ENCODE measurements at regions of chr11 and their contacts with region 1.

Region 1: GRCh38 chr11:34997952-34998528 is 81.6 kb downstream of the PDHX start:
- DNase-seq: peak; percentile 34
- H3K4me3 ChIP-seq: no peak overlapping the region
- H3K27ac ChIP-seq: no peak overlapping the region
- H3K4me1 ChIP-seq: no peaks in the 10 kb centered on the region
- CTCF ChIP-seq: peak; percentile 94

Region 2: DNA sequence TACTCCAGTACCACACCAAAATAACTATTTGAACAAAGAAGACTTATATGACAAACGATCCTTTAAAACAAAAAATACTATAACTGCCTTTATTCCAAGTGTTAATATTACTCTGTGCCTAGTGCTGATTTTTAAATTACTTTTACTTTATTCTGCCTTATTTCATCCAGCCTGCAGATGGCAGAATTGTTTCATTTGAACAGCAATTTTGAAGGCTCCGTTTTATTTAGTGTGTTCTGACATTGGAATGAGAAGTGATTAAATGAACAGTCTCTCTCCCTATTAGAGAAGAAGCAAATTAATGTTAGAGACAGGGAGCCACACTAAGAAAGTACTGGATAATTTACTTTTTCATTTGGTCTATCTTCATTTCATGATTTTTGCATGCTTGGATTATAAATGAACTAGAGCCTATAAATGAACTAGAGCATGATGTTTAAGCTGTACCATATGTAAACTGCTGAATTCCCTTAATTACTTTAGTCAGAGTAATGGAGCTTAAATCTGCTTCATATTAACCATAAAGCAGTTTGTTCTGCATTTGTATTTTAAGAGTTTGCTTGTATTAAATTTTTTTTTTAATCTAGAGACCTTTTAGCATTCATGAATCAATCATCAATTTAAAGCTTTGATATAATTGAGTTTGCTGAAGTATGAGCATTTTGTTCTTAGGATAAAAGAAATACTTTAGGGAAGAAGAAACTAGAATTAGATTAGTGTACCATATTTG is 71.8 kb before region 1 on chr11:
- CTCF ChIA-PET with region 1: no interaction called
- POLR2A ChIA-PET with region 1: interaction called, 7 read pairs
- intact Hi-C with region 1: loop called (anchors 5 kb)
- DNase-seq: peak; percentile 58
- H3K4me3 ChIP-seq: no peak overlapping the region
- H3K27ac ChIP-seq: no peak overlapping the region
- H3K4me1 ChIP-seq: no peaks in the 10 kb centered on the region
- CTCF ChIP-seq: peak; percentile 97

Region 3: GRCh38 chr11:35058669-35059434 is 60.8 kb after region 1 on chr11:
- CTCF ChIA-PET with region 1: no interaction called
- POLR2A ChIA-PET with region 1: interaction called, 4 read pairs
- intact Hi-C with region 1: loop called (anchors 5 kb)
- DNase-seq: peak; percentile 59
- H3K4me3 ChIP-seq: peak overlapping the region; percentile 35
- H3K27ac ChIP-seq: peak overlapping the region; percentile 40
- H3K4me1 ChIP-seq: peaks cover 21% of the 10 kb centered on the region
- CTCF ChIP-seq: no peak

Region 4: GRCh38 chr11:35165423-35166368 is 167.7 kb after region 1 on chr11:
- CTCF ChIA-PET with region 1: no interaction called
- POLR2A ChIA-PET with region 1: no interaction called
- intact Hi-C with region 1: loop called (anchors 1 kb)
- DNase-seq: peak; percentile 82
- H3K4me3 ChIP-seq: peak overlapping the region; percentile 53
- H3K27ac ChIP-seq: peak overlapping the region; percentile 39
- H3K4me1 ChIP-seq: peaks cover 43% of the 10 kb centered on the region
- CTCF ChIP-seq: no peak

Region 5: DNA sequence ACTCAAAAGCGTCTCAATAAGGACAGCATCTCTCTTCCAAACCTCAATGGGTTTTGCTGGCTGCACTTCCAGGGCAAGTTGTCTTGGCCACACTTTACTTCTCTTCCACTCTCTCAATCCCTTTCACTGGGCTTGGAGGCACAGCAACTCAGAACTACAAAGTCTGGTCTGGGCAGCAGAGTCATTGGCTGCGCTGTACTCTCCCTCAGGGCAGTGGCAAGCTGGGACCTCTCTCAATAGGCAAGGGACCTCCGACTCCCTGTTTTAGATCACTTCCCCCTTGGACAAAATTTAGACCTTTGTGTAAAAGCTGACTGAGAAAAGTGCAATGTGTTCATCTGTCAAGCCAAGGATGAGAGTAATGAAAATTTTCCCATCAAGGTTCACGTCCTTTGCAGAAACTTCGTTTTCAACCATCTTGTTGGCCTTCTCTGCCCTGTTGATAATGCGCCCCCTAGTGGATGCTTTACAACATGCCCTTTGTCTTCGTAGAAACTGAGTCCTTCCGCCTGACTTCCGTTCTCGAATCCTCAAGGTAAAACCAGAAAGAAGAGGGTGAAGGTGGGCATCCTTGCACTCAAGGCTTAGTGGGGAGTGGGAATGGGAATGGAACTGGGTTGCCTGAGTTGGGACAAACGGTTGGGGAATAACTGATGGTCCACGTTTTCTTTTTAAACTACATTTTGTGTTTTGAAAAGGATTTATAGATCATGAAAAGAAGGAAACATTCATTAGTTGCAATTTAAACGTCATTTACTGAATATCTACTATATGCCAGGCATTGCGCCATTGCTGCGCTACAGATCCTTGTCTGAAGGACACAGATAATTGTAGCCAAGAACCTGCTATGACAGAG is 240.0 kb after region 1 on chr11:
- CTCF ChIA-PET with region 1: no interaction called
- POLR2A ChIA-PET with region 1: interaction called, 3 read pairs
- intact Hi-C with region 1: loop called (anchors 1 kb)
- DNase-seq: peak; percentile 83
- H3K4me3 ChIP-seq: no peak overlapping the region
- H3K27ac ChIP-seq: no peak overlapping the region
- H3K4me1 ChIP-seq: peaks cover 12% of the 10 kb centered on the region
- CTCF ChIP-seq: peak; percentile 99

Region 6: DNA sequence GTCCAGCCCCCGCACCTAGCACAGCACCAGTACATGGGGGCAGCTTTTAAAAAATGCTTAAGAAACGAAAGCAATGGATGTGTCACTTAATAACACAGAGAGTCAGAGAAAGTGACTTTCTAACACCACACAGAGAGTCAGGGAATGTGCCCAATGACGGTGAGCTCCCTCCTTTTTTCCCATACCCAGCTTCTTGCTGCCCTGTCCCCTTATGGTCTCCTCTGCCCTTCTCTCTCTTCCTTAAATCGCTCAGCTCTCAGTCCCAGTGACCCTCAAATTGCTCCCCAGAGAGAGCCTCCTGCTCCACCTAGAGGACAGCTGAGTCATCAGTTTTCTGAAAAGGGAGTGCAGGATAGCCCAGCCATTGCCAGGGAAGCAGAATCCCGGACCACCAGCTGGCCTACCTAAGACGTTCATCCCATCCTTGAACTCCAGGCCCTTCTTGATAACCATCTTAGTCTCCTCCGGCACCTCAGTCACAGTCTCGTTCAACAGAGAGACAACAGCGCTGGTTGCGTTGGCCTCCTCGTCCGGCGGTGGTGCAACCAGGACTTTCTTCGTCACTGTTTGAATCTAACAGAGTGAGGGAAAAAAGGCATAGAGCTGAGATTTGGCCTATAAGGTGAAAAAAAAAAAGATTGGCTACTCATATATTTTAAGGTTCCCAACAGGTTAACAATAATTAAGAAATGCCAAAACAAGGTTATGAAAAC is 307.8 kb after region 1 on chr11:
- CTCF ChIA-PET with region 1: no interaction called
- POLR2A ChIA-PET with region 1: interaction called, 5 read pairs
- intact Hi-C with region 1: loop called (anchors 5 kb)
- DNase-seq: peak; percentile 42
- H3K4me3 ChIP-seq: no peak overlapping the region
- H3K27ac ChIP-seq: no peak overlapping the region
- H3K4me1 ChIP-seq: no peaks in the 10 kb centered on the region
- CTCF ChIP-seq: peak; percentile 73

Region 7: GRCh38 chr11:35391922-35392813 is 394.1 kb after region 1 on chr11:
- CTCF ChIA-PET with region 1: no interaction called
- POLR2A ChIA-PET with region 1: no interaction called
- intact Hi-C with region 1: loop called (anchors 1 kb)
- DNase-seq: peak; percentile 70
- H3K4me3 ChIP-seq: no peak overlapping the region
- H3K27ac ChIP-seq: no peak overlapping the region
- H3K4me1 ChIP-seq: peaks cover 13% of the 10 kb centered on the region
- CTCF ChIP-seq: peak; percentile 97

Measured in OCI-LY7 (cell line).